ENCODE measurements at regions of chr9 and their contacts with region 1.

Region 1: GRCh38 chr9:115850548-115851304 is 302.9 kb upstream of the PAPPA start:
- DNase-seq: peak; percentile 33
- H3K4me3 Mint-ChIP-seq: no peak overlapping the region
- H3K27ac Mint-ChIP-seq: no peak overlapping the region
- H3K4me1 Mint-ChIP-seq: peaks cover 27% of the 10 kb centered on the region
- H3K27me3 Mint-ChIP-seq: no peaks in the 10 kb centered on the region
- CTCF ChIP-seq: no peak

Region 2: DNA sequence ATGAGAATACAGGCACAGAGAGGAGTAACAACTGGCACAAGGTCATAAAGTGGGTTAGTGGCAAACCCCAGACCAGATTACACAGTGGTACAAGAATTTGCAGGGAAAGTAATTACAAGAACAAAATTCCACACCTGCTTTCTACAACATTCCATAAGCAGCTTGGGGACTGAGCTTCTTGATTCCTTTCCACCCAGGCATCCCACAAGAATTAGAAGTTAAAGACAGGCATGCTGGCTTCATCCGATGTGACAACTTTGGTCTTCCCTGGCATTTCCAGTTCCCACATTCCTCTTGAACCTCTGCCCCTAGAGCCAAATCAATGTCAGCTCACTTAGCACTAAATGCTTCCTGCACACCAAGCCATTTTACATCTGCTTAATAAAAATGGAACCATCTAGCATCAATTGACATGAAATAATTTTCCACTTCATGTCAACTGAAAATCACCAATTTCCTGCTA is 133.0 kb before region 1 on chr9:
- CTCF ChIA-PET with region 1: no interaction called
- POLR2A ChIA-PET with region 1: no interaction called
- intact Hi-C with region 1: loop called (anchors 10 kb)
- DNase-seq: no peak
- H3K4me3 Mint-ChIP-seq: no peak overlapping the region
- H3K27ac Mint-ChIP-seq: peak overlapping the region; percentile 15
- H3K4me1 Mint-ChIP-seq: peaks cover 27% of the 10 kb centered on the region
- H3K27me3 Mint-ChIP-seq: no peaks in the 10 kb centered on the region
- CTCF ChIP-seq: no peak

Region 3: GRCh38 chr9:115746496-115746895 is 104.2 kb before region 1 on chr9:
- CTCF ChIA-PET with region 1: no interaction called
- POLR2A ChIA-PET with region 1: no interaction called
- intact Hi-C with region 1: no loop called
- DNase-seq: no peak
- H3K4me3 Mint-ChIP-seq: no peak overlapping the region
- H3K27ac Mint-ChIP-seq: no peak overlapping the region
- H3K4me1 Mint-ChIP-seq: no peaks in the 10 kb centered on the region
- H3K27me3 Mint-ChIP-seq: no peaks in the 10 kb centered on the region
- CTCF ChIP-seq: no peak

Region 4: GRCh38 chr9:115969096-115969495 is 118.4 kb after region 1 on chr9:
- CTCF ChIA-PET with region 1: no interaction called
- POLR2A ChIA-PET with region 1: no interaction called
- intact Hi-C with region 1: no loop called
- DNase-seq: peak; percentile 50
- H3K4me3 Mint-ChIP-seq: no peak overlapping the region
- H3K27ac Mint-ChIP-seq: no peak overlapping the region
- H3K4me1 Mint-ChIP-seq: peaks cover 23% of the 10 kb centered on the region
- H3K27me3 Mint-ChIP-seq: no peaks in the 10 kb centered on the region
- CTCF ChIP-seq: no peak

Region 5: DNA sequence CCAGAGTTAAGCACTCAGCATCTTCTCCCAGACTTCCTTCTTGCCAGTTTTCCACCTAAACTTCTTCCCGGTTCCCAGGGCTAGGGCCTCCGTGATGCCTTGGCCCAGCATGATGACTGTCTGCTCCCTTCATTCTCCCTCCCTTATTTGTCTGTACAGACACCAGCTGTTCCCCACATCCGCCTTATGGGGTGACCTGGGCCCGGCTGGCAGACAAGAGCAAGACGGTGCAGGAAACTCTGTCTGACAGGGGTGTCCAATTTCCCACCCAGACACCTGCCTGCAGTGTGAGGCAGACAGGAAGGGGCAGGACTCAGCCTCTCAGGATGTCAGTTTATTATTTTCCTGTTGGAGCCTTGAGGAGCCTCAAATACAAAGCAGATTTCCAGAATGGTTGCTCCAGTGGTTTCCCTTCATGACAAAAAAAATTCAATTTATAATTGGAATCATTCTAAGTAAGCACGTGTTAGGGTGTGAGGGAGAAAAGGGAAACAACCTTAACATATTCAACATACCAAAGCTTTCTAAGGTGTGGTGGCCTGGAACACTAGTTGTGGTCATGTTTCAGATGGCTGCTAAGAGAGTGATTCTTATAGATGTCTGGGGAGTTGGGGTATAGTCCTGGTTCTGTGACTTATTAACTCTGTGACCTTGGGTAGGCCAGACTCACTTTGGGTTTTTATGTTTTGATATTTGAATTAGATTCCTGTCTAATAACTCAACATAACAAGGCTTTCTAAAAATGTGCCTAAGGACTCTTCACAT is 537.4 kb after region 1 on chr9:
- CTCF ChIA-PET with region 1: no interaction called
- POLR2A ChIA-PET with region 1: no interaction called
- intact Hi-C with region 1: no loop called
- DNase-seq: no peak
- H3K4me3 Mint-ChIP-seq: no peak overlapping the region
- H3K27ac Mint-ChIP-seq: no peak overlapping the region
- H3K4me1 Mint-ChIP-seq: peaks cover 10% of the 10 kb centered on the region
- H3K27me3 Mint-ChIP-seq: no peaks in the 10 kb centered on the region
- CTCF ChIP-seq: no peak

Measured in MCF 10A (cell line).